ENCODE measurements at regions of chr7 and their contacts with region 1.

Region 1: GRCh38 chr7:1659696-1660095 is 10.4 kb upstream of the ELFN1 start:
- DNase-seq: no peak
- ATAC-seq: no peak
- H3K4me3 ChIP-seq: no peak overlapping the region
- H3K27ac ChIP-seq: no peak overlapping the region
- H3K4me1 ChIP-seq: peaks cover 5 to 12% (median 9%) of the 10 kb centered on the region in 9 donors
- H3K27me3 ChIP-seq: peaks cover 7 to 56% (median 33%) of the 10 kb centered on the region in 7 donors
- CTCF ChIP-seq: no peak

Region 2: DNA sequence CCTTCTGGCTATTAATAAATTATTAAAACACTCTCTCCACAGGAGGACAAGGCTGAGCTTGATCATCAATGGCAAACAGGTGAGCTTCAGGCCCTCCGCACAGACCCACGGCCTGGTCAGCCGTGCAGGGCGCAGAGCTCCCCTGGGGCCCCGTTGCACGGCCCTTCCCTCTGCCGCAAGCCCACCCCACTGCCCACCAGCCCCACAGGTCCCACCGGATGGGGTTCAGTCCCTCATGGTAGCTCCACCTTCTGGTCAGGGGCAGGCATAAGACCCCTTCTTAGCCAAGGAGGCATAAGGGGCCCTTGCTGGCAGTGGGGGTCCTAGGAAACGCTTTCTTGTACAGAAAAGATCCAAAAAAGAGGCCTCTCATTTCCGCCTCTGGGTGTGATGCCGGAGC is 488.5 kb after region 1 on chr7:
- intact Hi-C with region 1: loop called in 1 of 10 experiments (anchors 10 kb)
- DNase-seq: no peak
- ATAC-seq: no peak
- H3K4me3 ChIP-seq: no peak overlapping the region
- H3K27ac ChIP-seq: no peak overlapping the region
- H3K4me1 ChIP-seq: peaks cover 0 to 19% (median 6%) of the 10 kb centered on the region in 9 donors
- H3K27me3 ChIP-seq: no peaks in the 10 kb centered on the region
- CTCF ChIP-seq: no peak

Measured in heart right ventricle (tissue), 16 donors.